A673 (cell line): ENCODE measurements at regions of chr9 and their contacts with region 1.

Region 1: DNA sequence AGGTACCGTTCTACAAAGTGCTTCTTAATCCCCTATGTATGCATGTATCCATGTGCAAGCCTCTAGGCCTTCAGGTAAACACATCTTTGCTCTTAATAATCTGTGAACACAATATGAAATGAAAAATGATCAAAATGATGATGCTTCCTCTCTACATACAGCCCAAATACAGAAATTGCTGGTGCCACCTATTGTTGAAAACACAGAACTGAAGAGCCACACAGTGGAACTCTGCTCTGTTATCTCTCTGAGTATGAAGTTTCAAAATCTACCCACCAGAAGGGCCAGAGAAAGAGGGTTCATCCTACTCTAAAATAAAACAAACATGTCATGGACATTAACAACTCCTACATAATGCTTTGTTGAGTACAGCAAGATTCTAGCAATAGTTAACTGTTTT is 71.3 kb downstream of the GLIS3 start:
- DNase-seq: peak; percentile 22
- H3K4me3 ChIP-seq: no peak overlapping the region
- H3K27ac ChIP-seq: no peak overlapping the region
- H3K4me1 ChIP-seq: no peaks in the 10 kb centered on the region
- H3K27me3 ChIP-seq: no peaks in the 10 kb centered on the region
- CTCF ChIP-seq: peak; percentile 64

Region 2: DNA sequence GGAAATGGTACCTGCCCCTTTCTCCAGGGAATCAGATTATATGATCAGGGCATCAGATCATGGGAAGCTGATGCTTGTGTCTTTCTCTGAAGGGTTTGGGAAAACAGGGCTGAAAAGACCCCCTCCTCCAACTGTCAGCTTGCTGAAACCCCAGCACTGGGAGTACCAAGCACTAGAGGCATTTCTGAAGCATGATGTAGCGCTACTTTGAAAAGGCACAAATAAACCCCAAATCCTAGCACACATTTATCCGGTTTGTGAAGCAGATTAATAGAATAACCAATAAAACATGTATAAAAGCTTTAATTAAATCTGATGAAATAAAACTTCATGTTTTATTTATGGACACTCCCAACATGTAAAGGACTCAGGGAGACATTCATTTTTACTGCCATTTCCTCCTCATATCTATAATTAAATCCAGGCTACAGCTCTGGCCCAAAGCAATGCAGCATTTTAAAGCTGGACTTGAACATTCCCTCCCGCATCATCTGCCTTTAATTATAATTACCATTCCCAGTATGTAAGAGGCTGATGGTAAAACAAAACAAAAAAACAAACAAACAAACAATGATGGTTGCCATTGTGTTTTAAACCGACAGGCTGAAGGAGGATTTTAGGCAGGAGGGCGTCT is 404.6 kb before region 1 on chr9:
- CTCF ChIA-PET with region 1: interaction called, 14 read pairs
- POLR2A ChIA-PET with region 1: no interaction called
- intact Hi-C with region 1: no loop called
- DNase-seq: peak; percentile 56
- H3K4me3 ChIP-seq: no peak overlapping the region
- H3K27ac ChIP-seq: no peak overlapping the region
- H3K4me1 ChIP-seq: peaks cover 15% of the 10 kb centered on the region
- H3K27me3 ChIP-seq: no peaks in the 10 kb centered on the region
- CTCF ChIP-seq: no peak